Activated CD4-positive, alpha-beta T cell treated with anti-CD3 and anti-CD28 coated beads, Interleukin-2, amount 10 ng/mL, durations not matched to agents 24 days and 14 days (primary cell): ENCODE measurements at regions of chr11 and their contacts with region 1.

Region 1: DNA sequence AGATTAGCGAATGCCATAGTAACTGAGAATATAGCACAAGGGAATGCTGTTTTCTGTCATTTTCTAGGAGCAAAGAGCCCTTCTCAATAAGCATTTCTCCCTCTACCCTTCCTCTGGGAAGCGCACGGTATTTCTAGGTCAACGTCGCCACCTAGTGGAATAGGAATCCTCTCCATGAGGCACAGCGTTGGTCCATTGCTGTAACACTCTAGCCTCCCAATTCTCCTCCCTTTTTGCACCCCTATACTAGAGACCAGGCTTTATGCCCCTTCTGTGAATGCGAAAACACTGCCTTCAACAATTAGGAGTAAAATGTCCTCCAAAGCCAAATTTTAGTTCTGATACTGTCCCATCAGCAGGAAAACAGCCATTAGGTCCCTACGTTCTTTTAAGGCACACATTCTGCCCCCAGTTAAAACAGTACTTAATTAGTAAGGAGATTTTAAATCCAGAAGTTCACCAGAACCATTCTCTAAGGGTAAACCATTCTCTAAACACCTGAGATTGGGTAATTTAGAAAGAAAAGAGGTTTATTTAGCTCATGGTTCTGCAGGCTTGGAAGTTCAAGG is 12.8 kb upstream of the HYLS1 start:
- DNase-seq: peak; percentile 85
- H3K4me3 Mint-ChIP-seq: no peak overlapping the region
- H3K27ac Mint-ChIP-seq: no peak overlapping the region
- H3K4me1 Mint-ChIP-seq: no peaks in the 10 kb centered on the region
- H3K27me3 Mint-ChIP-seq: peaks cover 26% of the 10 kb centered on the region

Region 2: DNA sequence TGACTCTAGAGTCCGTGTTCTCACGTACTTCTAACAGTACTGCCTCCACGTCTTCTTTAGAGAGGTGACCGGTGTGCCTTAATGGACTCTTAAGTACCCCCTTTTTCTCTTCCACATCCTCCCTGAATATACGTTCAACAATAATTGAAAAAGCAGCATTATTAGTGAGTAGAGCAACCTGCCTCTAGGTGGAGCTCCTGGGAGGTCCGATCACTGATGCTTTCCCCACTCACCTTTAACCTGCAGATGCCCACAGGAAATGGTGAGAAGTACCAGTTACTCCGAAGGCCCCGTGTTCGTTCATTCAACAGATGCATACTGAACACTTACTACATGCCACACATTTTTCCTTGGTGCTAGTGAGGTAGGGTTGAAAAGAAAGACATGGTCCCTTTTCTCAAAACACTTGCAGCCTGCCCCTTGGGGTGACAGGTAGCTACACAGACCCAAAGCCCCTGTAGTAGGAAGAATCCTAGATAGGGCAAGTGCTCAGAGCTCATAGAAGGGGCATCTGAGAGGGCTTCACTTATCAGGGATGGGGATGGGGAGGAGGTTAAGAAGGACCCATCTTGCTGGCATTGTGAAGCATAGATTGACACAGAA is 451.3 kb before region 1 on chr11:
- intact Hi-C with region 1: loop called (anchors 5 kb)
- DNase-seq: peak; percentile 58
- H3K4me3 Mint-ChIP-seq: no peak overlapping the region
- H3K27ac Mint-ChIP-seq: no peak overlapping the region
- H3K4me1 Mint-ChIP-seq: no peaks in the 10 kb centered on the region
- H3K27me3 Mint-ChIP-seq: peaks cover 13% of the 10 kb centered on the region

Region 3: GRCh38 chr11:125724125-125724524 is 150.5 kb before region 1 on chr11:
- intact Hi-C with region 1: loop called (anchors 5 kb)
- DNase-seq: no peak
- H3K4me3 Mint-ChIP-seq: no peak overlapping the region
- H3K27ac Mint-ChIP-seq: no peak overlapping the region
- H3K4me1 Mint-ChIP-seq: no peaks in the 10 kb centered on the region
- H3K27me3 Mint-ChIP-seq: peaks cover 17% of the 10 kb centered on the region

Region 4: DNA sequence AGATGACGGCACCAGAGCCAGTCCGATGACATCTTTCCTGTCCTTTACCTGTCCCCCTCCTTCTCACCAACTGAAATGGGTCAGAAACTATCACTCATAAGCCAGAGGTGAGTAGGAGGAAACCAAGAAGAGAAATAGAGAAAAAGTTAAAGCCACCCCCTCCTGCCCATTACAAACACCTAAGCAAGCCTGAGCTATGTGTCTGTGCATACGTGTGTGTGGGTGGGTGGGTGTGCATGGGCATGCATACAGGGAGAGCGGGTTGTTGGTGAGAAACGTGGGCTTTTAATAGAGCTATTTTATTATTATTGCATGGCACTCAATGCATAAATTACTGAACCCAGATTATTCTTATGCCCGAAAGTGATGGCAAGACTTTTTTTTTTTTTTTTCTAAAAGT is 38.9 kb before region 1 on chr11:
- intact Hi-C with region 1: no loop called
- DNase-seq: no peak
- H3K4me3 Mint-ChIP-seq: no peak overlapping the region
- H3K27ac Mint-ChIP-seq: no peak overlapping the region
- H3K4me1 Mint-ChIP-seq: no peaks in the 10 kb centered on the region
- H3K27me3 Mint-ChIP-seq: peaks cover 3% of the 10 kb centered on the region

Region 5: GRCh38 chr11:125968354-125968753 is 93.7 kb after region 1 on chr11:
- intact Hi-C with region 1: no loop called
- DNase-seq: no peak
- H3K4me3 Mint-ChIP-seq: no peak overlapping the region
- H3K27ac Mint-ChIP-seq: no peak overlapping the region
- H3K4me1 Mint-ChIP-seq: no peaks in the 10 kb centered on the region
- H3K27me3 Mint-ChIP-seq: peaks cover 4% of the 10 kb centered on the region